Ascending aorta (tissue), 2 donors: ENCODE measurements at regions of chr4 and their contacts with region 1.

Region 1: GRCh38 chr4:140252742-140253555 is 99.0 kb upstream of the MAML3 start:
- DNase-seq: peak in 1 of 2 donors; percentile 76
- H3K4me3 ChIP-seq: peak overlapping the region; percentile 64 to 79
- H3K27ac ChIP-seq: peak overlapping the region; percentile 83 to 84
- H3K4me1 ChIP-seq: peaks cover 3 to 7% of the 10 kb centered on the region in 2 donors
- H3K27me3 ChIP-seq: no peaks in the 10 kb centered on the region
- CTCF ChIP-seq: peak; percentile 77 to 88 (median 83)

Region 2: GRCh38 chr4:139656614-139657486 is 596.1 kb before region 1 on chr4:
- intact Hi-C with region 1: loop called (anchors 1 kb)
- DNase-seq: peak in 1 of 2 donors; percentile 72
- H3K4me3 ChIP-seq: peak overlapping the region in 1 of 2 donors; percentile 22
- H3K27ac ChIP-seq: no peak overlapping the region
- H3K4me1 ChIP-seq: peaks cover 0 to 10% of the 10 kb centered on the region in 2 donors
- H3K27me3 ChIP-seq: no peaks in the 10 kb centered on the region
- CTCF ChIP-seq: peak; percentile 63 to 82 (median 82)

Region 3: GRCh38 chr4:139734875-139735380 is 518.0 kb before region 1 on chr4:
- intact Hi-C with region 1: loop called (anchors 1 kb)
- DNase-seq: peak; percentile 51 to 93
- H3K4me3 ChIP-seq: peak overlapping the region; percentile 56 to 66
- H3K27ac ChIP-seq: peak overlapping the region; percentile 69 to 81
- H3K4me1 ChIP-seq: peaks cover 0 to 20% of the 10 kb centered on the region in 2 donors
- H3K27me3 ChIP-seq: no peaks in the 10 kb centered on the region
- CTCF ChIP-seq: peak; percentile 89 to 94 (median 91)

Region 4: DNA sequence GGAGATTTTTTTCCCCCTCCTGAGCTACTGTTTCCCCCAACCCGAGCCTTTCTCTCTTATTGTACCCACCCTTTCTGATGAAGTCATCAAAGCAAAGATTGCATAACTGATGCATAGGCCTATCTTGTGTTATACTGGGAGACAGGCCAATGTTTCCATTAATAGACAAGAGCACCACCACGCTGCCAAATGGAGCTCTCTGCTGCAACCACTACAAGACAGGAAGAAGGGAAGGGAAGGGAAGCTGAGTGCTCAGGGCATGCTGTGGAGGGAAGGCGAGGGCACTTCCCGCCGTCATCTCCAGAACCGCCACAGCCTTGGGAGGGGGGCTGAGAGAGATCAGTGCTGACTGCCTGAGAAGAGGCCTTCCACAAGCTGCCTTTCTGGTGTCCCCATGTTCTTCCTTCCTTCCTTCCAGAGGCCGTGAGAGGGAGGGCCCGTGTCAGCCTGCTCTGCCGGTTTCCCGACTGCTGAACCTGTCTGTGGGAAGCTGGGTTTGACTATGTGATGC is 512.4 kb before region 1 on chr4:
- intact Hi-C with region 1: loop called (anchors 1 kb)
- DNase-seq: peak in 1 of 2 donors; percentile 83
- H3K4me3 ChIP-seq: peak overlapping the region in 1 of 2 donors; percentile 19
- H3K27ac ChIP-seq: peak overlapping the region; percentile 71 to 77
- H3K4me1 ChIP-seq: peaks cover 0 to 19% of the 10 kb centered on the region in 2 donors
- H3K27me3 ChIP-seq: no peaks in the 10 kb centered on the region
- CTCF ChIP-seq: peak in 2 of 3 experiments; percentile 4 to 17

Region 5: DNA sequence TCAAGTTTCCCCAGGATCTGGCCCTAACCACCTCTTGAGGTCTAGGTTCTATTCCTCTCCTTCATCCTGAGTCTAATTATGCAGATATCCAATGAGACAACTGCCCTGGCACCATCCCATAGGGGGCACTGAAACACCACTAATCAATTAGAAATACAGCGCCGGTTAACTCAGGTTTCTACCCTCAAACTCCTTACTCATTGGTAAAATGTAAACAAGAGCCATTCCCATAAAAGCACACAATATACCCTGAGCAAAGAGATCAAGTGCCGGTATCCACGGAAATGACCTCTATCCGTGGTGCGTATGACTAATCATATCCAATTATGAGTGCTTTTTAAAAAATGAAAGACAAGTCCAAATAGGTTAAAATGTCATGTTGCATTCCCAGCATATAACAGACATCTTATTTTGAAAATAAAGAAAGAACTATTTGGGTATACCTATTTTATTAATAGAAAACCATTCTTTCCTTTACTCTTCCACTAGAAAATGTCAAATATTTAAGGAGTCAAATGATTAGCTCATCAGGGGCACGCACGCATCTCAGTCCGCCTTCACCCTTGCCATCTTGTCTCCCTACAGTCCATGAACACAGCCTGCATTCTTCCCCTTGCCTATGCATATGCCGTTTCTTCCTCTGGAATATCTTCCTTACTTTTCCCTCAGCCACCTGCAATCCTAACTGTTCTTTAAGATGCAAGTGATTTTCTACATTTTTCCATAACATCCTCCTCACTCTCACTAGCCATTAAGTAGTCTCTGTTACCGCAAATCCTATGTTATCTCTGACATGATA is 240.1 kb before region 1 on chr4:
- intact Hi-C with region 1: loop called (anchors 1 kb)
- DNase-seq: peak in 1 of 2 donors; percentile 75
- H3K4me3 ChIP-seq: peak overlapping the region in 1 of 2 donors; percentile 20
- H3K27ac ChIP-seq: no peak overlapping the region
- H3K4me1 ChIP-seq: peaks cover 0 to 5% of the 10 kb centered on the region in 2 donors
- H3K27me3 ChIP-seq: no peaks in the 10 kb centered on the region
- CTCF ChIP-seq: peak; percentile 34 to 53 (median 50)

Region 6: DNA sequence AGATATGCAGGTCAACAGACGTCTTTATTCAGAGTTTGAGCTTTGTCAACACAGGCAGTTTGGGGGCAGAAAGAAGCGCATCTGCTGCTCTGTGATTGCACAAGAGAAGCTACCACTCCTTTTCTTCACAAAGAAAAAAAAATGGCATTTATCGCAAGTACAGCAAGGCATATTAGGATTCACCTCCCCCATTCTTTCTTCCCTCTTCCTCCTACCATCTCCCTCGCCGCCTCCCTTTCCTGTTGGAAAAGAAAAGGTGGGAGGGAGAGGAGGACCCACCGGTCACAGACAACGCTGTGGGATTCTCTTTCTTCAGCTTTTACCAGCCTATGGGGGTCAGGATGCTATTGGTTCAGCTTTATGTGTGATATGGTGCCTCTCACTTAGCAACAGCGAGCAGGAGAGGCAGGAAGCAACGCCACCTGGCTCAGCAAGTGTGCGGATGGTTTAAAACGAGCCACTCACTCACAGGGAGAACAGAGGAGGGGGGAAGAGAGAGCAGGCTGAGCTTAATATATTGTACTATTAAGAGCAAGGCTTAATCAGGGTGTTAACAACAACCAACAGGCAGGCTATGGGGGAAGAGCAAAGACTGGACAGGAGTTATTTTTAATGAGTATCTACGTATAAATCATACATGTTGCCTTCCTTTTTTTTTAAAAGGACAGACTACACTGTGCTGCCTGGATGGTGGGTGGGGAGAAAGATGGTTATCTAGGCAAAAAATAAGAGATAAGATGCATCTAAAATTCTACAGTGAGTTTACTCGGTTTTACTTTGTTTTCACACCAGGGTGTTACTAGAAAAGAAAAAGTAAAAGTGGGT is 203.7 kb before region 1 on chr4:
- intact Hi-C with region 1: loop called (anchors 5 kb)
- DNase-seq: peak; percentile 18 to 71
- H3K4me3 ChIP-seq: peak overlapping the region; percentile 52 to 62
- H3K27ac ChIP-seq: peak overlapping the region; percentile 67 to 71
- H3K4me1 ChIP-seq: peaks cover 3 to 9% of the 10 kb centered on the region in 2 donors
- H3K27me3 ChIP-seq: no peaks in the 10 kb centered on the region
- CTCF ChIP-seq: peak in 1 of 3 experiments; percentile 30